ENCODE measurements at regions of chr3 and their contacts with region 1.

Region 1: DNA sequence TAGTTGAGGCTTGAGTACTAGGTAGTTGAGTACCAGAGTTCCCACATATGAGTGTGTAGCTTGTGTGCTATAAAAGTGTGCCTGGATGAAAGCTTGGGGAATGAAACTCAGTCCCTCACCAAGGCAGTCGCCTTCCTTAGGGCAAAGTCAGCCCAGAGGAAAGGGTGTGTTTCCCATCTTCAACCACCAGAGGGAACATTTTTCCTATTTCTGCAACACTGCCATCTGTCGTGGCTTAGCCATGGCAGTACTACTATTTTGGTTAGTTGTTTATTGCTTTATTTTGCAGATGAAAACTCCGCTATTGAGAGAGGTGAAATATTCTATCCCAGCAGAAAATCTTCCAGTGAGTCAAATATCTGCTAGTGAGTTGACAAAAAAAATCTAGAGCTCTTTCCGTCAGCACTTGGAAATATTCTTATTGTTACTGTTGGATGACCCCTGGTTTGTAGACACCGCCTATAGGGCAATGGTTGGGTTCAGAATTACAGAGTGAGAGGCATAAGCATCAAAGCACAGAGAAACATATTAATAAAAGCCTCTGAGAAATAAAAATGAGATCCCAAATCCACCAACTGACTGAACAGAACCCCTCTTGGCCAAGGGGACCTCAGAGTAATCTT is 239.9 kb downstream of the CPNE4 start:
- DNase-seq: peak in 4 of 5 donors; percentile 31 to 64 (median 50)
- H3K4me3 ChIP-seq: no peak overlapping the region
- H3K27ac ChIP-seq: no peak overlapping the region
- H3K4me1 ChIP-seq: no peaks in the 10 kb centered on the region
- H3K27me3 ChIP-seq: no peaks in the 10 kb centered on the region
- CTCF ChIP-seq: peak; percentile 91

Region 2: GRCh38 chr3:131549340-131549739 is 245.5 kb before region 1 on chr3:
- intact Hi-C with region 1: no loop called
- DNase-seq: no peak
- H3K4me3 ChIP-seq: no peak overlapping the region
- H3K27ac ChIP-seq: no peak overlapping the region
- H3K4me1 ChIP-seq: no peaks in the 10 kb centered on the region
- H3K27me3 ChIP-seq: no peaks in the 10 kb centered on the region
- CTCF ChIP-seq: no peak

Region 3: GRCh38 chr3:132034486-132035464 is 239.9 kb after region 1 on chr3 and contains the start of gene CPNE4:
- intact Hi-C with region 1: loop called (anchors 10 kb)
- DNase-seq: peak; percentile 88 to 94 (median 93)
- H3K4me3 ChIP-seq: peak within 1 kb of the TSS in 1 of 3 donors; percentile 40
- H3K27ac ChIP-seq: no peak within 1 kb of the TSS
- H3K4me1 ChIP-seq: peaks cover 0 to 3% (median 0%) of the 10 kb centered on the region in 3 donors
- H3K27me3 ChIP-seq: peaks cover 5% of the 10 kb centered on the region
- CTCF ChIP-seq: peak; percentile 62
- total RNA-seq, gene CPNE4: 0.79 TPM

Measured in kidney (tissue), 22 donors.